ENCODE measurements at regions of chr14 and their contacts with region 1.

Region 1: GRCh38 chr14:77097700-77098528 is at the start of gene CIPC:
- DNase-seq: peak; percentile 97

Region 2: GRCh38 chr14:76669770-76670169 is 428.1 kb before region 1 on chr14:
- CTCF ChIA-PET with region 1: no interaction called
- POLR2A ChIA-PET with region 1: no interaction called
- DNase-seq: no peak

Region 3: DNA sequence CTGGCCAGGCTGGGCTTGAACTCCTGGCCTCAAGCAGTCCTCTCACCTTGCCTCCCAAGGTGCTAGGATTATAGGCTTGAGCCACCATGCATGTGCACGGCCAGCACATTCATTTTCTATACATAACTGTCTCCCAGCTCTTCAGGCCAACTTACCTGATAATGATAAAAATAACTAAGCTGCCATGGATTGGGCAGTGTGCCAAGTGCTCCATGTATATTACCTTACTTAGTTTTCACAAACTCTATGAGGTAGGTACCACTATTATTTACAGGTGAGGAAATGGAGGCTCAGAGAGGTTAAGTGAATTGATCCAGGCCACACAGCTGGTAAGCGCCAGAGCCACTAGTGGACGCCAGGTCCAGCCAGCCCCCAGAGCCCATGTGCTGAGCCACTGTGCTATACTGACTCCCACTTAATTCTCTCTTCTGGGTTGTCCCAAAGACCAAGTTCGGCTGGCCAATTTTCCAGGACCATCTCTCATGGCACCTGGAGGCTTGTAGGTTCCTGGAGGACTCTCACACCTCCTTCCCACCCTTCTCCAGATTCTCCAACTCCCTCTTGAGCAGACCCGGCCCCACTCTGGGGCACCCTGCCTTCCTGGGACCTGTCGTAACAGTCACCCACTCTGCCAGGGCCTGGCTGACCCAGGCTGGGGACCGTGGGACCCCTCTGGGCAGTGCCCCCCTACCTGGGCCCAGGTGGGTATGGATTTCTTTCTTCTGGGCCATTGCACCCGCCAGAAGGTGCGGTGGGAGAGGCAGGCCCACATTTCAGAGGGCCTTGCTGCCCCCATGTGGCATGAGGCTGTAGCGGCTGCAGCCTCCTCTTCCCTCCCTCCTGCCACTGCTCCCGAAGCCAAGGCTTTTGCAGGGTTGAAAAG is 30.0 kb before region 1 on chr14:
- CTCF ChIA-PET with region 1: interaction called, 15 read pairs
- POLR2A ChIA-PET with region 1: interaction called, 9 read pairs
- DNase-seq: peak; percentile 76

Measured in HEK293T (cell line).